Testis (tissue), 5 donors: ENCODE measurements at regions of chr5 and their contacts with region 1.

Region 1: GRCh38 chr5:14264604-14265316 is 121.6 kb downstream of the TRIO start:
- DNase-seq: peak; percentile 94
- H3K4me3 ChIP-seq: peak overlapping the region in 1 of 2 donors; percentile 29
- H3K27ac ChIP-seq: no peak overlapping the region
- H3K4me1 ChIP-seq: peaks cover 14% of the 10 kb centered on the region
- H3K27me3 ChIP-seq: no peaks in the 10 kb centered on the region
- CTCF ChIP-seq: no peak
- POLR2A ChIP-seq: no peak

Region 2: DNA sequence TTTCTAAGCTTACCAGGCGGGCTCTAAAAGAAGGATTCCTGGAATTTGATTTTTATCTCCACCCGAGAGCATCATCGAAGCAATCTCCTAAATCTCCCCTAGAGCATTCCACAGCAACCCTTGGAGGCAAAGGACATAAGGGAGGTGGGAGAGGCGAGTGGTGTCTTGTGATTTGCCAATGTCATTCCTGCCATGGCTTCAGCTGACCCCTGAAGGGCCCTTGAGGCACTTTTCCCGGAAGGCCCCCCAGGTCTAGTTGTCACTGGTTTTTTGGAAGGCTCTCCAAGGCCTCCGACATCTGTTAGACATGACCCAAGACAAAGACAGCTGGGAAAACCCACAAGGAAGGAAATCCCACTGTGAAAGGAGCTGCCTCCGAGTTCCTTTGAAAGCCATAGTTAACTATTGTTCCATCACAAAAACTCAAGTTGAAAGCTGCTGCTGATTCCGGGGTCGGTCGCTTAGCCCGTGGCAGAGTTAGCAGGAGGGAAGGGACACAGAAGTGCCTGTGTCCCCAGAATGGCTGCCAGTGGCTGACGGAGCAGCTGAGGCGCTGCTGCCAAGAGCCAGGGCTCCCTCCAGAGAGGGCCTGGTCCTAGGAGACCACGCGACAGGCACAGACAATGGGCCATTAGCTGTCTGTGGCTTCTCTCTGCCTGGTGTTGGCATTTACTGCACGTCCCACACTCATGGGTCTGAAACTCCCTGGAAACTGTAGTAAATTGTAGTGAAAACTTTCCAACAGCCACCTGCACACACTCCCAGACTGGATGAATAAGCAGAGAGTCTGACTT is 146.0 kb before region 1 on chr5:
- intact Hi-C with region 1: loop called (anchors 10 kb)
- DNase-seq: no peak
- H3K4me3 ChIP-seq: no peak overlapping the region
- H3K27ac ChIP-seq: no peak overlapping the region
- H3K4me1 ChIP-seq: no peaks in the 10 kb centered on the region
- H3K27me3 ChIP-seq: no peaks in the 10 kb centered on the region
- CTCF ChIP-seq: no peak
- POLR2A ChIP-seq: no peak

Region 3: DNA sequence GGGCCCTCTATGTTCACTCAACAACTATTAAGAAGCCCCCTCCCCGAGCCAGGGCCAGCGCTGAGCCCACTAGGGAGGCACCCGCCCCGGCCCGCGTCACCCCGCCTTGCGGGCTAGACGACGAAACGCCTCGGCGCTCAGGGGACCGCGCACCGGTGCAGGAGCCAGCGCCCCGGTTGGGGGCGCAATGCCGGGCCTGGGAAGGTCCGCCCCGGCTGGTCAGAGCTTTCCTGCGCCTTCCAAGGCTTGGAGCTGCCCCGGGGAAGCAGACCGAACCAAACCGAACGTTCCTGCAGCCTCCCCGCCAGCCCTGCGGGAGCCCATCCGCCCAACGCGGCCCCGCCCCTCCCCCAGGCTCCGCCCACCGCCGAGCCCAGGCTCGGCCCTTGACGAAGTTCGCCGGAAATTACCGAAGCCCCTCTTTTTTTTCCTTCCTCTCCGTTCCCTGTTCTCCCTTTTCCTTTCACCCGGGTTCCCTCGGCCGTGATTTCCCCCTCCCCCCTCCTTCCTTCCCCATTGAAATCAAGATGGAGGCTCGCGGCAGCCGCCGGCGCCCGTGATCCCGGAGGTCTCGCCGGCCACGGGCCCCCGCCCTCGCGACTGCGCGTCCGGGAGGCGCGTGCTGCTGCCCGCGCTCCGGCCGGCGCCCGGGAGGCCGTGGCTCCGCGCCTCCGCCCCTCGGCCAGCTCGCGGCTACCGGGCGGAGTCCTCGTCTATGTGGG is 121.8 kb before region 1 on chr5 and contains the start of gene TRIO:
- intact Hi-C with region 1: loop called (anchors 10 kb)
- DNase-seq: peak; percentile 94
- H3K4me3 ChIP-seq: peak within 1 kb of the TSS; percentile 85 to 90
- H3K27ac ChIP-seq: peak within 1 kb of the TSS; percentile 97 to 98
- H3K4me1 ChIP-seq: peaks cover 28% of the 10 kb centered on the region
- H3K27me3 ChIP-seq: no peaks in the 10 kb centered on the region
- CTCF ChIP-seq: peak in 2 of 3 experiments; percentile 25 to 41
- POLR2A ChIP-seq: peak; percentile 8
- total RNA-seq, gene TRIO: 249 to 295 TPM

Region 4: DNA sequence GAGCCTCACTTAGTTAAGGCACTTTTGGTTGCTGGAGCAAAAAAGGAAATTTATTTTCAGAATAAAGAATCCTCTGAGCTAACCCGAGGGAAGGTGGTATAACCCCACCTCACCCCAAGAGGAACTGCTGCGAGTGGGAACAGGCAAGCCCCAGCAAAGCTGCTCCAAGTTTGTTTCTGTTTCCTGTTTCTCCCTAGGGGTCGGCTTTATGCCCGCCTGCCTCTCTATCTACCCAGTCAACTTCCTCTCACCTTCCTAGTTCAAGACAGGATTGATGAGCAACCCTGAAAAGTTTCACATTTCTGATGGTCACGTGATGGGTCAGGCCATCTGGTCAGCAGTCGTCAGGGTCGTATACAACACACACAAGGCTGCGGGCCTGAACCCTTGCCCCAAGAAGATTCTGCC is 90.5 kb before region 1 on chr5:
- intact Hi-C with region 1: no loop called
- DNase-seq: no peak
- H3K4me3 ChIP-seq: no peak overlapping the region
- H3K27ac ChIP-seq: no peak overlapping the region
- H3K4me1 ChIP-seq: no peaks in the 10 kb centered on the region
- H3K27me3 ChIP-seq: no peaks in the 10 kb centered on the region
- CTCF ChIP-seq: no peak
- POLR2A ChIP-seq: no peak

Region 5: GRCh38 chr5:14399054-14399692 is 134.4 kb after region 1 on chr5:
- intact Hi-C with region 1: no loop called
- DNase-seq: peak; percentile 54
- H3K4me3 ChIP-seq: no peak overlapping the region
- H3K27ac ChIP-seq: peak overlapping the region in 1 of 2 donors; percentile 71
- H3K4me1 ChIP-seq: no peaks in the 10 kb centered on the region
- H3K27me3 ChIP-seq: no peaks in the 10 kb centered on the region
- CTCF ChIP-seq: peak; percentile 50 to 70 (median 56)
- POLR2A ChIP-seq: no peak